Activated CD4-positive, alpha-beta T cell treated with anti-CD3 and anti-CD28 coated beads for 36 hours (primary cell): ENCODE measurements at regions of chr15 and their contacts with region 1.

Region 1: DNA sequence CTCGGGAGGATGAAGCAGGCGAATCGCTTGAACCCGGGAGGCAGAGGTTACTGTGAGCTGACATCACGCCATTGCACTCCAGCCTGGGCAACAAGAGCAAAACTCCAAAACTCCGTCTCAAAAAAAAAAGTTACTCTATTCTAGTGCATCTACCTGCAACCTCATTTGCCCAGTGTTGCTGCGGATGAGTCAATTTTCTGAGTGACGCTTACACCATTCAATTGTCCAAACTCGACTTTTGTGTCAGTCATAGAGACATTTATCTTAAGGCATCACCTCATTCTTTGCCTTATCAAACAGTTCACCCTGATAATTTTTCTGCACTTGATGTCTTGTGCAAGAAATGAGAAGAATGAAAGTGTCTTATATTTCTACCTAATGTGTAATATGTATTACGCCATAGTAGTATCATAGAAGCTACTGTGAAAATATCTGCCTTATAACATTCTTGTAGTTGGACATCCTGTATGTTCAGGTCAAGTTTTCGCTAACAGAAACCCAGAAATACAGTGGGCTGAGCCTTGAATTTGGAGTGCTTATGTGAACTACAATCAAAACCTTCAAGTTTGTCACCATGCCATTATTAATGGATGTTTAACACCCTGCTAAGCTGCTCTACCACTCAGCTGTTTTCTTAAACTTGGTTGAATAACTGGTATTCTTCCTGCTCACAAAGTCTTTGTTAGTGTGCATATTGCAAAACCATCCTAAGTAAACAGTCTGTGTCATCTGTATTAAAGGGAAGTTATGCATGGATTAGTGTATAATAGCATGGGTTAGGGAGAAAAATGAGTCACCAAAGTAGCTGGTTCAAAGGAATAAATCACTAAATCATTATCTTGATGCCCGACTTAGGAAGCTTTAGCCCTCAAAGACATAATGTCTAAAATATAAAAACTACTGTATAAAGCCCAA is 531.0 kb upstream of the NR2F2 start:
- DNase-seq: no peak
- ATAC-seq: no peak
- H3K4me3 Mint-ChIP-seq: no peak overlapping the region
- H3K27ac Mint-ChIP-seq: no peak overlapping the region
- H3K4me1 Mint-ChIP-seq: peaks cover 2% of the 10 kb centered on the region
- H3K27me3 Mint-ChIP-seq: no peaks in the 10 kb centered on the region

Region 2: GRCh38 chr15:95857124-95857757 is 57.7 kb after region 1 on chr15:
- CTCF ChIA-PET with region 1: no interaction called
- POLR2A ChIA-PET with region 1: no interaction called
- intact Hi-C with region 1: loop called in 1 of 2 experiments (anchors 10 kb)
- DNase-seq: no peak
- ATAC-seq: no peak
- H3K4me3 Mint-ChIP-seq: no peak overlapping the region
- H3K27ac Mint-ChIP-seq: no peak overlapping the region
- H3K4me1 Mint-ChIP-seq: no peaks in the 10 kb centered on the region
- H3K27me3 Mint-ChIP-seq: peaks cover 2% of the 10 kb centered on the region